Activated naive CD4-positive, alpha-beta T cell treated with anti-CD3 and anti-CD28 coated beads, Interleukin-2, amount 10 ng/mL, durations not matched to agents 7 days and 5 days (primary cell): ENCODE measurements at regions of chr1 and their contacts with region 1.

Region 1: GRCh38 chr1:25675729-25676476 is 59.3 kb downstream of the MAN1C1 start:
- DNase-seq: peak; percentile 92
- H3K4me3 Mint-ChIP-seq: peak overlapping the region; percentile 59
- H3K27ac Mint-ChIP-seq: peak overlapping the region; percentile 79
- H3K4me1 Mint-ChIP-seq: peaks cover 75% of the 10 kb centered on the region
- H3K27me3 Mint-ChIP-seq: peaks cover 55% of the 10 kb centered on the region

Region 2: DNA sequence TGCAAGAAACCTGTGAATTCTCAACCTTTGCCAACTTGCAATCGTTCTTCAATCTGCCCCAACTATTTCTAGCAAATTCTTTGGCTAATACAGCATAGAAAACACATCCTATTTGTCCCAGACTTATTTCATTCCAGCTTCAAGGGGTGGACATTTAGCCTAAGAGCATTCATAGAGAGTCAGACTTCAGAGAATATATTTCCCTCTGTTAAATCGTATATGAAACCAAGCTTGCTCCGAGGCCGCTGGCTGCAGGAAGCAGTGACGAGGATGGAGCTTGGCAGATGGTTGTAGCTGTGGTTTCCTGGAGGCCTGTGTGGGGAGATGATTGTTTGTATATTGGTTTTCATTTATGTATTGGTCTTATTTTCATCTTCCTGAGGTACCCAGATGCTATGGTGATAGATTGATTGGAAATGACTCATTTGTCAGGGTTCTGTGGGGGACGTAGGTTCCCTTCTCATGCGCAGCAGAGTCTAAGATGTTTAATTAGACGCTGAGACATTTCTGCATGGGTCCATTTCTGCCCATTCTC is 33.3 kb before region 1 on chr1:
- CTCF ChIA-PET with region 1: interaction called, 10 read pairs
- DNase-seq: peak; percentile 86
- H3K4me3 Mint-ChIP-seq: peak overlapping the region; percentile 59
- H3K27ac Mint-ChIP-seq: peak overlapping the region; percentile 93
- H3K4me1 Mint-ChIP-seq: peaks cover 70% of the 10 kb centered on the region
- H3K27me3 Mint-ChIP-seq: peaks cover 44% of the 10 kb centered on the region